Cardiac septum (tissue), 1 donor: ENCODE measurements at regions of chrX and their contacts with region 1.

Region 1: DNA sequence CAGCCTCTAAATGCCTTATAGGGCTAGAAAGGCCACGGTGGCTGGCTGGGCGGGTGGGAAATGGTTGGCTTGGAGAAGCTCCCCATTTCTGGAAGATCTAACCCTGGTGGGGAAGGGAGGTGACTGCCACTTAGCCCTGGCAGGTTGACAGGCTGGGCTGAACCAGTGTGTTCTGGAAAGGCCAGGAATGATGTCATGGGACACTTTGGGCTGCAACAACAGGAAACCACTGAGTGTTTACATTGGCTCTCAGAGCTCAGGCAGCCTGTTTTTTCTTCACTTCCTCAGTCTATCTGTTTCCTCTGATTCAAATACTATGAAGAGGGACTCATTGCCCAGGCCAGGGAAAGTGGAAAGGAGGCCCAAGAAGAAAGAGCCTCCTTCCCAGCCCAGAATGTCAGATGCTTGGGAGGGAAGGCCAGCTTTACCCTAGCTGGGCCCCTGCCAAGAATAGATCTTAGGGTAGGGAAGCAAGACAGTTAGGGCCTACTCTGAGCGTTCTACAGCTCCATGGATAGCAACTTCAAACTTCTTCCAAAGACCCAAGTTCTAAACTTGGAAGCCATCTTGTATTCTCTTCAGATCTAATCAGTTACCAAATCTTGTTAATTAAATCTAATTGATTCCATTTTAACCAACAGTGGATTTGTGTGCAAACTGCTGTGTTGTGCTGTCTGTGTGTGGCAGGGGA is 65.8 kb upstream of the MSN start:
- DNase-seq: peak; percentile 92

Region 2: DNA sequence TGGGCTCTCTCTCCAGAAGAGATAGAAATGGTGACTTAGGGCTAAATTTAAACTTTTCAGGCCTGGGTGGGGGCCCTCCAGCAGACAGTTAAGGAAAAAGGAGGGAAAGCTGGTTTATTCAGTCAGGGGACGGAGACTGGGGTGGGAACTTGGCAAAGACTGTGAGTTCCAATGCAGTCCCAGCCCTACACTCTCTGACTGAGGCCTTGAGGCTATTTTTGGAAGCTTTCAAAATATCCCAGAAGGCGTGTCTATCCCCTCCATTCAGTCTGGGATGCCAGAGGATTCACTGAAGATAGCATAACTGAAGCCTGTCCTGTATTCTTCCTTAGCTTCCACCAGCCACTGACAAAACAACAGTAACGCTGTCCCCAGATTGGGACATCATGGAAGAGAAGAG is 33.7 kb after region 1 on chrX:
- intact Hi-C with region 1: loop called (anchors 2 kb)
- DNase-seq: no peak

Region 3: GRCh38 chrX:65677954-65678469 is 76.3 kb after region 1 on chrX:
- intact Hi-C with region 1: loop called (anchors 1 kb)
- DNase-seq: no peak

Region 4: GRCh38 chrX:65706041-65706828 is 104.6 kb after region 1 on chrX:
- intact Hi-C with region 1: loop called (anchors 2 kb)
- DNase-seq: no peak